Testis (tissue), 5 donors: ENCODE measurements at regions of chr6 and their contacts with region 1.

Region 1: DNA sequence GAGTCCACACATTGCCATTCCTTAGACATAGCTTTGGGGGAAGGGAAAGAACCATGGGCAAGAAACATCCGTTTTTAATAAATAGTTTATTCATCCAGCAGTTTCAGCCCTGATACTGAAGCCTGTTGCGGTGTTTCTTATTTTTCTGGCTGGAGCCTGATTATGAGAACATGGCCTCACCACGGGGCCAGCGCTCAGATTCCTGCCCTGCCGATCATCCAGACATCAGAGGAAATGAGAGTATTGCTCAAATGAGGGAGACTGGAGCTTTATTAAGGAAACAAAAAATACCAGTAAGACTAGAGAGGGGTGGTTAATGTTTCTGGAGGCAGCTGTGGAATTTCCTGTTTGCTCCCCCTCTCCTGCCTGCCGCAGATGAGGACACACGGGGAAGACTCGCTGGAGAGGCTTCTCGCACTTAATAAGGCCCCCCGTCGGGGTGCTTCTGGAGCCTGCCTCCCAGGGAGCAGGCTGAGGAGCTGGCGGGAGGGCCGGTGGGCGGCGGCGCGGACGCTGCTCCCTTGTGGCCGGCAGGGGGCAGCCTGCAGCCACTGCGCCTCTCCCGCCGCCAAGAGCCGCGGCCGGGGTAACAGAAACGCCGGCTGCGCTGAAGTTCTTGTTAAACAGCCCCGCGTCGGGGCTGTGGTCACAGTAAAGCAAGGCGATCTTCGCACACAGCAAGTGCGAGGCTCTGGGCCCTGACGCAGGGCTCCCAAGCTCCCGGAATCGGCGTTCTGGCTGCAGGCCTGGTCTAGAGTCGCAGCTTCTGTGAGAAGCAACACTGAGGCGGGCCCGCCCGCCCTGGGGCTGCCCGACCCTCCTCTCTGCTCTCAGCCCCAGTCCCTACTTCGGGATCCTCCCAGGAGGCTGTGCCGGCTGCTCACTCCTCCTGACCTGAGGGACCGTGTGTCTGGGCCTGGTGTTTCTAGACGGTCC is 17.5 kb downstream of the LEMD2 start:
- DNase-seq: peak; percentile 78
- H3K4me3 ChIP-seq: peak overlapping the region in 1 of 2 donors; percentile 15
- H3K27ac ChIP-seq: peak overlapping the region; percentile 66 to 77
- H3K4me1 ChIP-seq: peaks cover 24% of the 10 kb centered on the region
- H3K27me3 ChIP-seq: no peaks in the 10 kb centered on the region
- CTCF ChIP-seq: peak; percentile 89 to 93 (median 91)
- POLR2A ChIP-seq: no peak

Region 2: GRCh38 chr6:34027445-34027936 is 256.1 kb after region 1 on chr6:
- intact Hi-C with region 1: loop called (anchors 10 kb)
- DNase-seq: peak; percentile 37
- H3K4me3 ChIP-seq: no peak overlapping the region
- H3K27ac ChIP-seq: no peak overlapping the region
- H3K4me1 ChIP-seq: no peaks in the 10 kb centered on the region
- H3K27me3 ChIP-seq: no peaks in the 10 kb centered on the region
- CTCF ChIP-seq: peak; percentile 62 to 73 (median 68)
- POLR2A ChIP-seq: no peak